ENCODE measurements at regions of chr10 and their contacts with region 1.

Region 1: DNA sequence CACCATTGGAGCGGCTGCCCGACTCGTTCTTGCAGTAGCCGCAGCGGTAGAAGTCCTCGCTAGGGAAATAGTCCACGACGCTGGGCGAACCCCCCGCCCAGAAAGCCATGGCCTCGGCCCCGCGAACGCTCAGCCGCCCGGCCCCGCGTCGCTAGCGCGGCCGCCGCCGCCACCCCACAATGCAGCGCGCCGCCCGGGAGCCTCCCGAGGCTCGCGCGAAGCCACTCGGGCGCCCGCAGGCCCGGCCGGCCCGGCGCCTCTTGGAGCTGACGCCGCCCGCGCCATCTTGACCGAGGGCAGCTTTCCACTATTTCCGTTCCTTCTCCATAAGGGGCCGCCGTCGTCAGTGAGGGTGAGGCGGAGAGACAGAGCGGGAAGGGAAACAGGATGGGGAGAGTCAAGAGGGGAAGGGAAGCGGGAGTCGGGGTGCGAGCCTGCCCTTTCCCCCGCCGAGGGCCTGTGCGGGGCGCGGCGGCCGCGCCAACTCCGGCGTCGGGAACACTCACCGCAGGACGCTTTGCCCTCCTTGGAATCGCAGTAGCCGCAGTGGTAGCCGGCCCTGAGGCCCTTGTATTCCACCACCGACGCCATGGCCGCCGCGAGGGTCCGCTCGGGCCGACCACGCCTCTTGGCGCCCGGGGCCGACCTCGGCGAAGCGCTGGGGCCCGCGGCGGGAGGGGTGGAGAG is at the start of gene ATE1:
- DNase-seq: peak; percentile 95
- total RNA-seq, gene ATE1: 38.1 TPM

Region 2: DNA sequence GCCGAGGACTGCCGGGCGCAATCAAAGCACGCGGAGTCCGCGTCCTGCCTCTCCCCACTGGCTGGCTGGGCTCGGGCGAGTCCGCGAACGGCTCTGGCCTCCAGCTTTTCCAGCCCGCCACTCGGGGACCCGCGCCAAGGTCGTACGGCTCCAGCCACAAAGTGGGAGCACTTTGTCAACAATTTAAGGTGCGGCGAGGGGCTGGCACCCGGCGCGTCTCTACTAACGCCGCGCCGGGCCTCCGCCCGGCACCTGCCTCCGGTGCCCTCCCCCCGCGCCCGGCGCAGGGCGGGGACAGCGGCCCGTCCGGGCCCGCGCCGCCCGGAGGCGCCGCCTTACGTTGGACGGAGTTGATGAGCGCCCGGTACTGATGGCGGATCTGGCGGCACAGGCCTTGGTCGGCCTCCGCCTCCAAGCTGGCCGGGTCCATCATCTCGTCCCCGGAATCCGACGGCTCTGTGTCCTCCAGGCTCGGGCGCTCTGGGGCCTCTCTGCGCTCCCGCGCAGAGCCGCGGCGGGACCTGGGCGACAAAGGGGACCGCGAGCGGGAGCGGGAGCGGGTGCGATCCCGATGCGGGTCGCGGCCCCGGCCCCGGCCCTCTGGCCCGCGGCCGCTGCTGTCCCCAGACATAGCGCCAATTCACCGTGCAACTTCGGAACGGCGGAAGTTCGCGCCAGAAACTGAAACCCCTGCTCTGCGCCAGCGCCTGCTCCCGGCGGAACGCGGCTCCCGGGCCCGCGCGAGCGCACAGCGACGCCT is 46.7 kb after region 1 on chr10 and contains the start of gene NSMCE4A:
- intact Hi-C with region 1: loop called (anchors 5 kb)
- DNase-seq: peak; percentile 91
- total RNA-seq, gene NSMCE4A: 29.0 TPM

Region 3: DNA sequence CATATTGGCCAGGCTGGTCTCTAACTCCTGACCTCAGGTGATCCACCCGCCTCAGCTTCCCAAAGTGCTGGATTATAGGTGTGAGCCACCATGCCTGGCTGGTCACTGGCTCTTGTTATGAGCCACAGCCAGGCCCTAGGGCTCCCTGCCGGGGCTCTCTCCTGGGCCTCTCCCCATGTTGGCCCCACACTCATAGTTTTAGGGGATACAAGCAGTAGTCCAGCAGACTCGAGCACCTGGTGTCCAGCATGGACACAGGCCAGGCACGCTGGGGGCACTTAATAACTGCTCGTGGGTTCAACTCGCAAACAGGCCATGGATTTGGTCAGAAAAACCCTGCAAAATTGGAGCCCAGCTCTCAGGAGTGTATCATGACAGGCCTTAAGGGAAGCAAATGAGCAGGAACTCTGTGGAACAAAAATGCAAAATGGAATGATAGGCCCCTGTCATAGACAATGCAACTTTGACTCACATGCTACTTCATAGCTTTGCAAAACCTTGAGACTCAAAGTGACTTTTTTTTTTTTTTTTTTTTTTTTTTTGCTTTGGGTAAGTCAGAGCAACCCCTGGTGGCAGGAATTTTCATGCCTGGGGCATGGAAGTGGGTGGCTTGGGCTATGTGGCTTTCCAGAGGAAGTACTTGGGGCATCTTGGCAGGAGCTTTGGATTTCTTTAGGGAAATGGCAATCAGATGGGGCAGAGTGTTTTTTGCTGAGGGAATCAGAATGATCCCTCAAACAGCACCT is 123.4 kb after region 1 on chr10:
- intact Hi-C with region 1: loop called (anchors 5 kb)
- DNase-seq: no peak

Region 4: DNA sequence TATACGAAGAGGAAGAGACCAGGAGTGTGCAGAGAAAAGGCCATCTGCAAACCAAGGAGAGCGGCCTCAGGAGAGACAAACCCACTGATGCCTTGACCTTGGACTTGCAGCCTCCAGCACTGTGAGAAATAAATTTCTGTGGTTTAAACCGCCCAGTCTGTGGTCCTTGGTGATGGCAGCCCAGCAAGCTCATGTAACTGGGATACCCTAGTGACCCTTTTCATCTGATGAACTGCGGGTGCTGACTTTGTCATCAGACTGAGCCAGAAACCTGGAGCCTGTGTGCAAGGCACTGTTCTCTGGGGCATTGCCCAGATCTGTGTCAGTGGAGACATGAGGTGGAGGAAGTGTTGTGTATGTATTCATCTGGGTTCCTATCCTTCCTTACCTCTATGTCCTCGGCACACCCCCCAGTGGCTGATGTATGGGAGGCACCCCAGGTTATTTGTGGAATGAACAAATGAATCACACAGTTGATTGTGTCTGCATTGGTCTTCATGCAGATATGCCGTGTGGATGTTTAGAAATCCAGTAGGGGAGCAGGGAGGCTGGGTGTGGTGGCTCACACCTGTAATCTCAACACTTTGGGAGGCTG is 278.6 kb after region 1 on chr10:
- intact Hi-C with region 1: no loop called
- DNase-seq: no peak